ENCODE measurements at regions of chr1 and their contacts with region 1.

Region 1: DNA sequence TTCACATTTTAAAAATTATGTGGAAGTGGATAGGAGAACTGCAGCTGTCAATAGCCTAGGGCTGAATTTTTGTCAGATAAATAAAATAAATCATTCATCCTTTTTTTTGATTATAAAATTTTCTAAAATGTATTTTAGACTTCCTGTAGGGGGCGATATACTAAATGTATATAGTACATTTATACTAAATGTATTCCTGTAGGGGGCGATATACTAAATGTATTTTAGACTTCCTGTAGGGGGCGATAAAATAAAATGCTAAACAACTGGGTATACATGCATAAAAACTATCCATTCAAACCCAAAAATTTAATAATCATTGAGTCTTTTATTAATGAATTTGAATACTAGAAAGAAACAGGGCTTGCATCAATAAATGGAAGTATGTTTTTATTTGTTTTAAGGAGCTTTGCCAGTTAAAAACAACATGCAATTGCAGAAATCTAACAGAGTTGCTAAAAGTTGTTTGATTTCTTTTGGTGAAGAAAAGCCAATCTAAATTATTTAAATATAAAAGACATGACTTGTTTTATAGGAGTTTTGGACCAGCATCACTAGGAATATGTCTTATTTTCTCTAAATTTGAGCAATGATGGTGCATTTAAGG is 31.4 kb downstream of the CLCA1 start:
- DNase-seq: no peak
- ATAC-seq: peak; percentile 37
- H3K4me3 Mint-ChIP-seq: no peak overlapping the region
- H3K27ac Mint-ChIP-seq: no peak overlapping the region
- H3K4me1 Mint-ChIP-seq: peaks cover 5% of the 10 kb centered on the region
- H3K27me3 Mint-ChIP-seq: peaks cover 8% of the 10 kb centered on the region

Region 2: GRCh38 chr1:86395771-86396497 is 104.2 kb before region 1 on chr1 and contains the start of gene ODF2L:
- CTCF ChIA-PET with region 1: interaction called, 6 read pairs
- POLR2A ChIA-PET with region 1: no interaction called
- intact Hi-C with region 1: loop called (anchors 5 kb)
- DNase-seq: peak; percentile 94
- ATAC-seq: peak; percentile 100
- H3K4me3 Mint-ChIP-seq: peak within 1 kb of the TSS; percentile 89
- H3K27ac Mint-ChIP-seq: peak within 1 kb of the TSS; percentile 88
- H3K4me1 Mint-ChIP-seq: peaks cover 41% of the 10 kb centered on the region
- H3K27me3 Mint-ChIP-seq: no peaks in the 10 kb centered on the region
- total RNA-seq, gene ODF2L: 18.8 to 27.3 TPM

Region 3: DNA sequence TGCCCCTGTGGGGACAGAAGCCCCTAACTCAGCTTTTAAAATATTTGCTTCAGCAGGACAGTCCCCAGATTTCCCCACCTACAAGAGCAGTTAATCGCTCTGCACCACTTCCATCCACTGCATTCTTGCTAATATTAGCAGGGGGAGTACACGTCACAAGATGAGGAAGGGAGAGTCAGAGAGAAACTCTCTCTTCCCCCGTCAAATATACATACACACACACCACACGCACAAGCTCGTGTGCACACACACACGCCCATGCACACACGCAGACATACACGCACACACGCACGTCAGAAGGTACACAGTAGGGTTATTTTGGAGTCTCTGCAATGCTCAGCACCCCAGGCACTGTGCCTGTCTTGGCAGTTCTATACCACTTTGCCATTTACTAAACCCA is 29.2 kb before region 1 on chr1:
- CTCF ChIA-PET with region 1: interaction called, 18 read pairs
- POLR2A ChIA-PET with region 1: no interaction called
- intact Hi-C with region 1: no loop called
- DNase-seq: no peak
- ATAC-seq: no peak
- H3K4me3 Mint-ChIP-seq: no peak overlapping the region
- H3K27ac Mint-ChIP-seq: no peak overlapping the region
- H3K4me1 Mint-ChIP-seq: no peaks in the 10 kb centered on the region
- H3K27me3 Mint-ChIP-seq: peaks cover 3% of the 10 kb centered on the region

Region 4: GRCh38 chr1:86515597-86515996 is 15.5 kb after region 1 on chr1:
- CTCF ChIA-PET with region 1: interaction called, 37 read pairs
- POLR2A ChIA-PET with region 1: no interaction called
- intact Hi-C with region 1: no loop called
- DNase-seq: no peak
- ATAC-seq: no peak
- H3K4me3 Mint-ChIP-seq: no peak overlapping the region
- H3K27ac Mint-ChIP-seq: no peak overlapping the region
- H3K4me1 Mint-ChIP-seq: no peaks in the 10 kb centered on the region
- H3K27me3 Mint-ChIP-seq: peaks cover 3% of the 10 kb centered on the region

Region 5: DNA sequence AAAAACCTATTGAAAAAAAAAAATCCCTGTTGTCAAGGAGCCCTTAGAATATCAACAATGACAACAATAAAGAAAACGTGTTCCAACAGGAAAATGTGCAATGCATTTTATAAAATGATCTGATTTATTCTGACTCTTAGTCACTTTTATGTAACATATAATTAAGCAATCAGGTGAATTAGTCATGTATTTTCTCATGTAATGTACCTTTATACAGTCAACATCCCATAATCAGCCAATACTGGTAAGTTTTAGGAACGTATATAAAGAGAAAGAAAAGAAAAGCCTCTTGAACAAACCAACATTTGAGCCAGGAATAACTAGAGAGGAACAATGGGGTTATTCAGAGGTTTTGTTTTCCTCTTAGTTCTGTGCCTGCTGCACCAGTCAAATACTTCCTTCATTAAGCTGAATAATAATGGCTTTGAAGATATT is 46.7 kb after region 1 on chr1 and contains the start of gene CLCA4:
- CTCF ChIA-PET with region 1: no interaction called
- POLR2A ChIA-PET with region 1: no interaction called
- intact Hi-C with region 1: no loop called
- DNase-seq: no peak
- ATAC-seq: no peak
- H3K4me3 Mint-ChIP-seq: no peak within 1 kb of the TSS
- H3K27ac Mint-ChIP-seq: no peak within 1 kb of the TSS
- H3K4me1 Mint-ChIP-seq: no peaks in the 10 kb centered on the region
- H3K27me3 Mint-ChIP-seq: peaks cover 6% of the 10 kb centered on the region
- total RNA-seq, gene CLCA4: not detected

Region 6: DNA sequence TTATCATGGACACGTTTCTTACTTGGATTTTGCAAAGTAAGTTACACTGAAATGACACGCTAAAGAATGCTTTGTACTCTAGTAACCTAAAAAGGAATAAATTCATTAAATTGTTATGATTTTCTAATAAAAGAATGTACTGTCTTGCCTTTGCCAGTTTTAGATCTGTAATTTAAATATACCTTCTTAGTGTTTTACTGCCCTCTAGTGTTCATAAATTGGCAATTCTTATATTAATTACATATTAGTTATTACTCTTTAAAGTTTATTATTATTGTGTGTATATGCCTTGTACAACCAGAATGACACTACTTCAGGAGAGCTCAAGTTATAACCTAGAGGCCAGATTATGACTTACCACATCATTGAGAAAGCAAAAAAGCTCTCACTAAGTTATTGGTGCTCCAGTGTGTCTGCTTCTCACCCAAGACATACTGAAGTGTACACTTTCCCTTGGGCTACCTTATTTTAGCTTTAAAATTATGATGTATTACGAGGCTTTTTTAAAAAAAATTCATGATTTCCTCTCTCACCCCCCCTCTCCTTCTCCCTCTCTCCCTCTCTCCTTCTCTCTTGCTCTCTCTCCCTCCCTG is 584.2 kb after region 1 on chr1:
- CTCF ChIA-PET with region 1: interaction called, 3 read pairs
- POLR2A ChIA-PET with region 1: no interaction called
- intact Hi-C with region 1: loop called (anchors 5 to 10 kb)
- DNase-seq: no peak
- ATAC-seq: peak; percentile 30
- H3K4me3 Mint-ChIP-seq: no peak overlapping the region
- H3K27ac Mint-ChIP-seq: no peak overlapping the region
- H3K4me1 Mint-ChIP-seq: peaks cover 13% of the 10 kb centered on the region
- H3K27me3 Mint-ChIP-seq: no peaks in the 10 kb centered on the region